ENCODE measurements at regions of chr4 and their contacts with region 1.

Region 1: GRCh38 chr4:108141213-108141950 is 27.4 kb downstream of the LEF1 start:
- DNase-seq: no peak
- H3K4me3 ChIP-seq: no peak overlapping the region
- H3K4me3 Mint-ChIP-seq: peak overlapping the region; percentile 32 to 84 (median 66)
- H3K27ac ChIP-seq: peak overlapping the region; percentile 6
- H3K27ac Mint-ChIP-seq: peak overlapping the region; percentile 44 to 87 (median 83)
- H3K4me1 ChIP-seq: peaks cover 100% of the 10 kb centered on the region
- H3K4me1 Mint-ChIP-seq: peaks cover 73 to 95% (median 82%) of the 10 kb centered on the region in 4 donors
- H3K27me3 ChIP-seq: no peaks in the 10 kb centered on the region
- H3K27me3 Mint-ChIP-seq: peaks cover 0 to 1% of the 10 kb centered on the region in 2 donors

Region 2: GRCh38 chr4:108160741-108161352 is 19.5 kb after region 1 on chr4:
- CTCF ChIA-PET with region 1: interaction called, 4 read pairs
- POLR2A ChIA-PET with region 1: interaction called, 8 read pairs
- intact Hi-C with region 1: loop called (anchors 2 kb)
- DNase-seq: peak; percentile 38 to 50 (median 47)
- H3K4me3 ChIP-seq: peak overlapping the region; percentile 19 to 81
- H3K4me3 Mint-ChIP-seq: peak overlapping the region; percentile 85 to 98 (median 88)
- H3K27ac ChIP-seq: peak overlapping the region; percentile 27
- H3K27ac Mint-ChIP-seq: peak overlapping the region; percentile 19 to 89 (median 75)
- H3K4me1 ChIP-seq: peaks cover 77% of the 10 kb centered on the region
- H3K4me1 Mint-ChIP-seq: peaks cover 30 to 84% (median 47%) of the 10 kb centered on the region in 4 donors
- H3K27me3 ChIP-seq: no peaks in the 10 kb centered on the region
- H3K27me3 Mint-ChIP-seq: no peaks in the 10 kb centered on the region

Measured in CD4-positive, alpha-beta memory T cell (primary cell).